ENCODE measurements at regions of chr2 and their contacts with region 1.

Region 1: DNA sequence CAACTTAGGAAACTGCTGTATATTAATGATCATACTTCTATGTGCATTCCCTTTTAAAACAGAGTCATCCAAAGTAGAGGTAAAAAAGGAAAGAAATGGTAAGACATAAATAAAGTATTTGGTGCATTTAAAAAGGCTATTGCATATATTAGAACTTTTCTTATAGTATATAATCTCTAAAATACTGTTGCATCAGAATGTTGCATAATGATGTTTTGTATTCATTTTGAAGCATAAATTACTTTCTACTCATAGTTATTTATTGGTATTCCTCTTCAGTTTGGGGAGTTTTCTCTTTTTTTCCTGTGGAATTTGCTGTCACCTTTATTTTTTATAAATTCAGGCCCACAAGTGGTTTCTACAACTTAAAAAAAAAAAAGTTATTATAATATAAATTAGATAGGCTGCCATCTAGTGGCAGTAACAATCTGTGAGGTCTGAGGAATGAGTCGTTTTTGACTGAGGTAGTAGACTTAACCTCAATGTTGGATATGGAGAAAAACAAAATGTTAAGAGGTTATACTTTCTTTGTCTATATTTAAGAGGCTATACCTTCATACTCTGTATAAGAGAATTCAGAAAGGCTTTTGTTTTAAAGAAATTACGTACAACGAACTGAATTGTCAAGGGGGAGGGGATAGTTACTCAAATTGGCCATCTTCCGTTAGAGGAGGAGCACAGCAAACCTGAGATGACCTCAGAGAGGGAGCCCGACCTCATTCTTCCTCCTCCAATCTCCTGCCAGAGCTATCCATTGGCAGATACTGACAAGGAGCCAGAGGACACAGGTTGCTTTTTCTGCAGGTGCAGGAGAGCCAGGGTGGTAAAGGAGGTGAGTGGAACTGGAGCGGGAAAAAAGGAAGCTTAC is 23.8 kb downstream of the ANKAR start:
- DNase-seq: peak; percentile 53
- H3K4me3 ChIP-seq: no peak overlapping the region
- H3K27ac ChIP-seq: no peak overlapping the region
- H3K4me1 ChIP-seq: no peaks in the 10 kb centered on the region
- H3K27me3 ChIP-seq: no peaks in the 10 kb centered on the region
- CTCF ChIP-seq: peak; percentile 49

Region 2: DNA sequence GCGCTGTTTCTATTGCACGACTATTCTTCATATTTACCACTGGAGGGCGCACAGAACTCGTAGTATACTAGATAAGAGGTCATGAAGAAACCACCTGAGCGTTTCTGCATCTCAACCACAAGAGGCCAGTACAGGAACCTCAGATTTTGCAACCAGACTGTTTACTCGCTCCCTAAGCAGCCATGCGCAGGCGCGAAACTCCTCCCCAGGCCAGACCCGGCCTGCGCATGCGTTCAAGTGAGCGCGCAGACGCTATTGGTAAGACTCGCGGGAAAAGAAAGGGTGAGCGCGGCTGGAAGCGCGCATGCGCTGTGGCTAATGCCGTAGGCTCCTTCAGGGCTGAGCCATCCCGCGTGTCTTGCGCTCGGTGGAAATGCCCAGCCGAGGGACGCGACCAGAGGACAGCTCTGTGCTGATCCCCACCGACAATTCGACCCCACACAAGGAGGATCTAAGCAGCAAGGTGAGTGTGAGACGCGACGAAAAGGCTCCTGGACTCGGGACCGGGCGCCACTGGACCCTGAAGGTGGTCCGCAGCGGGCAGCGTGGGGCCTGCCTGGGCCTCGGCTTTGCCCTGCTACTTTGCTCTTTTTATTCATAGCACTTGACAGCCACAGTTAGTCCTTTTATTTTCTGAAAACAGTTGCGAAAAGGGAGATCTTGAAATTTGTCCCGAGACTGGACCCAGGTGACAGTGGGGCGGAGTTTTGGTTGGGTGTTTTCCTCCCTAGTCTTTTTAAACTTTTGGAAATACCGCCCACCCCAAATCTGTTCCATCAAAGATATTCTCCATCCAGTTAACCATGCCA is 36.9 kb before region 1 on chr2 and contains the start of gene ASNSD1:
- intact Hi-C with region 1: loop called (anchors 5 kb)
- DNase-seq: peak; percentile 97
- H3K4me3 ChIP-seq: peak within 1 kb of the TSS; percentile 83
- H3K27ac ChIP-seq: peak within 1 kb of the TSS; percentile 78
- H3K4me1 ChIP-seq: no peaks in the 10 kb centered on the region
- H3K27me3 ChIP-seq: no peaks in the 10 kb centered on the region
- CTCF ChIP-seq: peak; percentile 90
- total RNA-seq, gene ASNSD1: 24.4 to 28.1 TPM

Measured in colonic mucosa (tissue), 4 donors.